ENCODE measurements at regions of chr4 and their contacts with region 1.

Region 1: DNA sequence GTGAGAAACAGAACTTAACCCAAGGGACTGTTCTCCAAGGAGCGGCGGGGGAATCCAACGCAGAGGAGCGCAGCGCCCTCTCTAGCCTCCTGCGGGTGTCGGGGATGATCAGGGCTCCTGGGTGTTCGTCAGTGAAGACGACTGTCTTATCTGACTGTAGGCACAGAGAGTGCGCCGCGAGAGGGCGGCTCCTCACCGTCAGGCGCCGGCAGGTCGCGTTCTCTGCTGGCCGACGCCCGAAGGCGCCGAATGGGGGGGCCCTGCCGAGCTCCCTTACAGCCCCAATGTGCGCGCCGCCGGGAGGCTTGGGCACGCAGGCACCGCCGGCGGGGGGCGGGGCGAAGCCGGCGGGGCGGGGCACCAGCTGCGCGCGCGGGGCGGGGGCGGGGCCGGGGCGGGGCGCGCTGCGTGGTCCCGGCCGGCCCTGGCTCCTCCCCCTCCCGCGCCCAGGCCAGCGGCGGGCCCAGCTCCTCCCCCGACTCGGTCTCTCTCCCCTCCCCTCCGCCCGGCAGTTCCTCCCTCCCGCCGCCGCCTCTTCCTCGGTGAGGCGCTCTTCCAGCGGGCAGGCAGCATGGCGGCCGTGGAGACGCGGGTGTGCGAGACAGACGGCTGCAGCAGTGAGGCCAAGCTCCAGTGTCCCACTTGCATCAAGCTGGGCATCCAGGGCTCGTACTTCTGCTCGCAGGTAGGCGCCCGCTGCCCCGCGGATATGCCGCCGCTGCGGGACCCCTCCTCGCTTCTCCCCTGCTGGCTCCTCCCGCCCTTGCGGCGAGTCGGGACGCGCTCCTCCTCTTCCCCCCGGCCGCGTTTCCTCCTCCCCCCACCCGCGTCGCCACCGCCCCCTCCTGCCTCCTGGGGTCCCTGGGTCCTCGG is at the start of gene METAP1:
- DNase-seq: peak; percentile 95 to 98 (median 97)
- H3K4me3 ChIP-seq: peak within 1 kb of the TSS; percentile 78
- H3K4me3 Mint-ChIP-seq: peak within 1 kb of the TSS; percentile 81 to 95 (median 91)
- H3K27ac ChIP-seq: peak within 1 kb of the TSS; percentile 87
- H3K27ac Mint-ChIP-seq: peak within 1 kb of the TSS; percentile 90 to 100 (median 98)
- H3K4me1 ChIP-seq: peaks cover 24% of the 10 kb centered on the region
- H3K4me1 Mint-ChIP-seq: peaks cover 35 to 46% (median 45%) of the 10 kb centered on the region in 3 donors
- H3K27me3 ChIP-seq: no peaks in the 10 kb centered on the region
- H3K27me3 Mint-ChIP-seq: peaks cover 1 to 3% of the 10 kb centered on the region in 2 donors
- total RNA-seq, gene METAP1: 56.6 to 58.5 TPM

Region 2: GRCh38 chr4:98260579-98261290 is 734.7 kb before region 1 on chr4:
- CTCF ChIA-PET with region 1: interaction called, 3 read pairs
- POLR2A ChIA-PET with region 1: interaction called, 14 read pairs
- DNase-seq: peak in 4 of 5 donors; percentile 82 to 91 (median 85)
- H3K4me3 ChIP-seq: peak overlapping the region; percentile 83
- H3K4me3 Mint-ChIP-seq: peak overlapping the region; percentile 89 to 97 (median 92)
- H3K27ac ChIP-seq: peak overlapping the region; percentile 87
- H3K27ac Mint-ChIP-seq: peak overlapping the region; percentile 89 to 97 (median 94)
- H3K4me1 ChIP-seq: peaks cover 32% of the 10 kb centered on the region
- H3K4me1 Mint-ChIP-seq: peaks cover 47 to 53% (median 53%) of the 10 kb centered on the region in 3 donors
- H3K27me3 ChIP-seq: no peaks in the 10 kb centered on the region
- H3K27me3 Mint-ChIP-seq: no peaks in the 10 kb centered on the region

Region 3: DNA sequence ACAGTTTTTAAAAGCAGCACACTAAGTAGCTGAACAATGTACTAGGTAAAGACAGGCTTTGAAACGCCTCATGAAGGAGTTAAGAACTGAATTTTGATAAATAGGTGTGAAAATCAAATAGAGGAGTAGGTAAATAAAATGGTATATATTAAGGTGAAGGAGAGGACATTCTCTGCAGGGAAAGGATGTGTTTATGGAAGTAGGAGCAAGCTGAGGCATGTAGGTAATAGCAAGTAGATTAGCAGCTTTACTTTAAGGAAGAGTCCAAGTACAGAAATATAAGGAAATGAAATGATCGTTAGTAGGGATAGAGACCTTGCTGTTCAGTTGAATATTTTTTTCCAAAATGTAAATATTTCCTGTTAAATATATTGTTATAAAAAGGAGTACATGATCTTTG is 12.6 kb after region 1 on chr4:
- CTCF ChIA-PET with region 1: interaction called, 18 read pairs
- POLR2A ChIA-PET with region 1: no interaction called
- DNase-seq: no peak
- H3K4me3 ChIP-seq: no peak overlapping the region
- H3K4me3 Mint-ChIP-seq: no peak overlapping the region
- H3K27ac ChIP-seq: no peak overlapping the region
- H3K27ac Mint-ChIP-seq: peak overlapping the region in 1 of 8 donors; percentile 8
- H3K4me1 ChIP-seq: no peaks in the 10 kb centered on the region
- H3K4me1 Mint-ChIP-seq: peaks cover 52 to 74% (median 71%) of the 10 kb centered on the region in 3 donors
- H3K27me3 ChIP-seq: no peaks in the 10 kb centered on the region
- H3K27me3 Mint-ChIP-seq: no peaks in the 10 kb centered on the region

Region 4: DNA sequence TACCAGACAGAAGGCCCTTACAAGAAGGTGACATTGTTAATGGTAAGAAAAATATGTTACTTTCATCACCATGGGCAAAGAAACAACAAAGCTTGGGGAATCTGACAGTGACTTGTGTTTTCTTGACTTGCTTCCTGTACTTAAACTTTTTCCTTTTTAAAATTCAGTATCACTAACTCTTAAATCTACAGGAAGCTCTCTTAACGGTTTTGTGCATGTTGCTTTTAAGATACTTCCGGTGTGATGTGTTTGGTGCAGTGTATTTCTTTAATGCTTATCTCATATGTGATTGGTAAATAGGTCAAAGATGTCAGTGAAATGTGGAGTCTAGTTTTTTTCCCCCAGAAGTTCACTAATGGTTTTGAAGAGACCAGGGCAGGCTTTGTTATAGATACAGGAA is 47.9 kb after region 1 on chr4:
- CTCF ChIA-PET with region 1: interaction called, 22 read pairs
- POLR2A ChIA-PET with region 1: interaction called, 7 read pairs
- DNase-seq: peak in 2 of 5 donors; percentile 47 to 50
- H3K4me3 ChIP-seq: no peak overlapping the region
- H3K4me3 Mint-ChIP-seq: peak overlapping the region in 6 of 7 donors; percentile 4 to 61 (median 40)
- H3K27ac ChIP-seq: peak overlapping the region; percentile 49
- H3K27ac Mint-ChIP-seq: peak overlapping the region; percentile 3 to 87 (median 72)
- H3K4me1 ChIP-seq: peaks cover 22% of the 10 kb centered on the region
- H3K4me1 Mint-ChIP-seq: peaks cover 23 to 27% (median 25%) of the 10 kb centered on the region in 3 donors
- H3K27me3 ChIP-seq: no peaks in the 10 kb centered on the region
- H3K27me3 Mint-ChIP-seq: no peaks in the 10 kb centered on the region

Region 5: GRCh38 chr4:99062120-99062519 is 66.7 kb after region 1 on chr4:
- CTCF ChIA-PET with region 1: interaction called, 189 read pairs
- POLR2A ChIA-PET with region 1: interaction called, 10 read pairs
- DNase-seq: no peak
- H3K4me3 ChIP-seq: no peak overlapping the region
- H3K4me3 Mint-ChIP-seq: no peak overlapping the region
- H3K27ac ChIP-seq: no peak overlapping the region
- H3K27ac Mint-ChIP-seq: peak overlapping the region in 1 of 8 donors; percentile 32
- H3K4me1 ChIP-seq: no peaks in the 10 kb centered on the region
- H3K4me1 Mint-ChIP-seq: no peaks in the 10 kb centered on the region
- H3K27me3 ChIP-seq: no peaks in the 10 kb centered on the region
- H3K27me3 Mint-ChIP-seq: no peaks in the 10 kb centered on the region

Region 6: GRCh38 chr4:99293357-99293756 is 297.9 kb after region 1 on chr4:
- CTCF ChIA-PET with region 1: no interaction called
- POLR2A ChIA-PET with region 1: no interaction called
- DNase-seq: no peak
- H3K4me3 ChIP-seq: no peak overlapping the region
- H3K4me3 Mint-ChIP-seq: no peak overlapping the region
- H3K27ac ChIP-seq: no peak overlapping the region
- H3K27ac Mint-ChIP-seq: no peak overlapping the region
- H3K4me1 ChIP-seq: no peaks in the 10 kb centered on the region
- H3K4me1 Mint-ChIP-seq: no peaks in the 10 kb centered on the region
- H3K27me3 ChIP-seq: no peaks in the 10 kb centered on the region
- H3K27me3 Mint-ChIP-seq: peaks cover 5 to 20% of the 10 kb centered on the region in 2 donors